ENCODE measurements at regions of chr6 and their contacts with region 1.

Region 1: GRCh38 chr6:12289933-12290820 is at the start of gene EDN1:
- DNase-seq: peak; percentile 82 to 86
- H3K4me3 ChIP-seq: peak within 1 kb of the TSS; percentile 50
- H3K4me3 Mint-ChIP-seq: peak within 1 kb of the TSS; percentile 86
- H3K27ac Mint-ChIP-seq: peak within 1 kb of the TSS; percentile 86
- H3K4me1 ChIP-seq: peaks cover 31% of the 10 kb centered on the region
- H3K4me1 Mint-ChIP-seq: peaks cover 29% of the 10 kb centered on the region
- H3K27me3 ChIP-seq: no peaks in the 10 kb centered on the region
- H3K27me3 Mint-ChIP-seq: no peaks in the 10 kb centered on the region
- CTCF ChIP-seq: peak; percentile 50 to 54
- total RNA-seq, gene EDN1: 13.5 and 14.0 TPM in 2 replicates

Region 2: DNA sequence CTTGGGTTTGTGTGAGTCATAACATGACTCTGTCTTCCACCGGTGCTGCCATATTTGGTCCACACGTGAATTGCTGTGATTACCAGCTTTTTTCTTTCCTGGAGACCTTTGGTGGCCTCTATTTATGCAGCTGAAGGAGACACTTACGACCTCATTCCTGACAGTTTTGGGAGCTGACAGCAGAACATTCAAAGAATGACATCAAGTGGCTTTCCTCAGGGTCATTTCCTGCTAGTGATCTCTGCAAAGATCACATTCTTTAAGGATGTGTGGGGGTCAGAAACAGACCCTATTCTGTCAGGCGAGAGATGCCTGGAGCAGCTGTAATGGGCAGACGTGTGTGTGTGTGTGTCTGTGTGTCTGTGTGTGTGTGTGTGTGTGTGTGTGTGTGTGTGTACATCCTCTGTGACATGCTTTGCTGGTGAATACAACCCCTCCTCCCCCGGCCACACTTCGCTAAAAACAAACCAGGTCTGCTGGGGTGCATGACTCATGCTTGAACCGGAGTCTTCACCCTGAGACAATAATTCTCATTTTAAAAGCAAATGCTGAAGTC is 637.1 kb before region 1 on chr6:
- CTCF ChIA-PET with region 1: interaction called, 4 read pairs
- POLR2A ChIA-PET with region 1: no interaction called
- intact Hi-C with region 1: loop called (anchors 1 kb)
- DNase-seq: peak in 1 of 2 experiments; percentile 43
- H3K4me3 ChIP-seq: no peak overlapping the region
- H3K4me3 Mint-ChIP-seq: no peak overlapping the region
- H3K27ac Mint-ChIP-seq: peak overlapping the region; percentile 62
- H3K4me1 ChIP-seq: peaks cover 32% of the 10 kb centered on the region
- H3K4me1 Mint-ChIP-seq: peaks cover 17% of the 10 kb centered on the region
- H3K27me3 ChIP-seq: no peaks in the 10 kb centered on the region
- H3K27me3 Mint-ChIP-seq: no peaks in the 10 kb centered on the region
- CTCF ChIP-seq: no peak

Region 3: DNA sequence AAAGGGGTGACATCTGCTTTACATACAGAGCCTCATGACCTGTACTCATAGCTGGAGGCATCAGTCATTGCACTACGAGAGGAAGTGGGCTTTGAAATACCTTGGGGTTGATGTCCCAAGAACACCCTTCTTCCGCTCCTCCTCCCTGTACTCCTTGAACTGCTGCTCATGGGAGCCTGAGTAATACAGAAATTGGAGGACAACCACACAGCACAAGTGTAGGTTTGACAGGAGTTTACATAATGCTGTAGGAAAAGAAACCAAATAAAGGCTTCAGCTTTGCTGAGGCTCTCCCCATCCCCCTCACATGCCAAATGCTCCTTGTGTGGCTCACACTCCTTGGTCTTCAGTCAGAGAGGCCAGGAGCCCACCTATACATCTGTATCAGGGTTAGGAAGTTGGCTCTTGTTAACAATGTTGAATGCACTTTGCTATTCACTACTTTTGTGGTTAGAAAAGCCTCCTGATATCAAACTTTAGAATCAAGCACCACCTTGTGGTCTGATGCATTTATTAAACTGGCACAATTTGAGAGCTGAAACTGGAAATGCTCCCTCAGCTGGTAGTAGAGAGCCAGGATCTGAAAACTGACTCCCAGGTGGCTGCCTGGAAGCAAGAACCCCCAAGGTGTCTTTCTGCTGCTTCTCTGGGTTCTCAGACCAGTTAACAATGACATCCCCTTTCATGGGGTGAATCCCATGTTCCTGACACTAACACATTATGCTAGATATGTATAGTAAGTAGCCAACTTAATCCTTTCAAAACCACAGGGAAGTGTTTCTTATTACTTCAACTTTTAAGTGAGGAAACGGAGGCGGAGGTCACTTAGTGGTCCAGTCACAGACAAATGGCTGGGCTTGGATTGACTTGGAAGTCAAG is 56.2 kb before region 1 on chr6:
- CTCF ChIA-PET with region 1: interaction called, 8 read pairs
- POLR2A ChIA-PET with region 1: no interaction called
- intact Hi-C with region 1: loop called (anchors 2 kb)
- DNase-seq: peak; percentile 45 to 61
- H3K4me3 ChIP-seq: no peak overlapping the region
- H3K4me3 Mint-ChIP-seq: no peak overlapping the region
- H3K27ac Mint-ChIP-seq: no peak overlapping the region
- H3K4me1 ChIP-seq: peaks cover 15% of the 10 kb centered on the region
- H3K4me1 Mint-ChIP-seq: peaks cover 3% of the 10 kb centered on the region
- H3K27me3 ChIP-seq: no peaks in the 10 kb centered on the region
- H3K27me3 Mint-ChIP-seq: no peaks in the 10 kb centered on the region
- CTCF ChIP-seq: peak; percentile 66 to 72

Region 4: GRCh38 chr6:12331956-12332749 is 42.0 kb after region 1 on chr6:
- CTCF ChIA-PET with region 1: interaction called, 9 read pairs
- POLR2A ChIA-PET with region 1: interaction called, 15 read pairs
- intact Hi-C with region 1: loop called (anchors 1 kb)
- DNase-seq: peak; percentile 86 to 90
- H3K4me3 ChIP-seq: no peak overlapping the region
- H3K4me3 Mint-ChIP-seq: peak overlapping the region; percentile 34
- H3K27ac Mint-ChIP-seq: peak overlapping the region; percentile 91
- H3K4me1 ChIP-seq: peaks cover 44% of the 10 kb centered on the region
- H3K4me1 Mint-ChIP-seq: peaks cover 54% of the 10 kb centered on the region
- H3K27me3 ChIP-seq: no peaks in the 10 kb centered on the region; the same call in 1 of the 2 replicates
- H3K27me3 Mint-ChIP-seq: no peaks in the 10 kb centered on the region
- CTCF ChIP-seq: no peak

Region 5: GRCh38 chr6:12440981-12441380 is 150.8 kb after region 1 on chr6:
- CTCF ChIA-PET with region 1: no interaction called
- POLR2A ChIA-PET with region 1: no interaction called
- intact Hi-C with region 1: loop called (anchors 5 kb)
- DNase-seq: peak in 1 of 2 experiments; percentile 18
- H3K4me3 ChIP-seq: no peak overlapping the region
- H3K4me3 Mint-ChIP-seq: no peak overlapping the region
- H3K27ac Mint-ChIP-seq: no peak overlapping the region
- H3K4me1 ChIP-seq: peaks cover 45% of the 10 kb centered on the region
- H3K4me1 Mint-ChIP-seq: peaks cover 29% of the 10 kb centered on the region
- H3K27me3 ChIP-seq: no peaks in the 10 kb centered on the region
- H3K27me3 Mint-ChIP-seq: no peaks in the 10 kb centered on the region
- CTCF ChIP-seq: no peak

Region 6: GRCh38 chr6:12504319-12504966 is 214.3 kb after region 1 on chr6:
- CTCF ChIA-PET with region 1: interaction called, 5 read pairs
- POLR2A ChIA-PET with region 1: no interaction called
- intact Hi-C with region 1: loop called (anchors 1 kb)
- DNase-seq: peak in 1 of 2 experiments; percentile 55
- H3K4me3 ChIP-seq: no peak overlapping the region
- H3K4me3 Mint-ChIP-seq: no peak overlapping the region
- H3K27ac Mint-ChIP-seq: no peak overlapping the region
- H3K4me1 ChIP-seq: no peaks in the 10 kb centered on the region
- H3K4me1 Mint-ChIP-seq: peaks cover 7% of the 10 kb centered on the region
- H3K27me3 ChIP-seq: no peaks in the 10 kb centered on the region
- H3K27me3 Mint-ChIP-seq: no peaks in the 10 kb centered on the region
- CTCF ChIP-seq: peak; percentile 24 to 41